Naive thymus-derived CD4-positive, alpha-beta T cell (primary cell): ENCODE measurements at regions of chr12 and their contacts with region 1.

Region 1: GRCh38 chr12:49623142-49623904 is at the start of gene PRPF40B:
- DNase-seq: peak; percentile 82 to 92 (median 89)
- ATAC-seq: peak; percentile 89
- H3K4me3 ChIP-seq: peak within 1 kb of the TSS; percentile 42
- H3K4me3 Mint-ChIP-seq: peak within 1 kb of the TSS; percentile 86 to 96 (median 91)
- H3K27ac ChIP-seq: peak within 1 kb of the TSS; percentile 66
- H3K27ac Mint-ChIP-seq: peak within 1 kb of the TSS; percentile 81 to 95 (median 91)
- H3K4me1 ChIP-seq: peaks cover 6 to 22% of the 10 kb centered on the region in 2 donors
- H3K4me1 Mint-ChIP-seq: peaks cover 19 to 29% (median 23%) of the 10 kb centered on the region in 7 donors
- H3K27me3 ChIP-seq: no peaks in the 10 kb centered on the region
- H3K27me3 Mint-ChIP-seq: peaks cover 0 to 32% (median 0%) of the 10 kb centered on the region in 5 donors
- total RNA-seq, gene PRPF40B: 7.8 to 24.1 (median 12.1) TPM

Region 2: GRCh38 chr12:49366652-49367380 is 256.5 kb before region 1 on chr12:
- CTCF ChIA-PET with region 1: interaction called, 3 read pairs
- POLR2A ChIA-PET with region 1: no interaction called
- intact Hi-C with region 1: loop called (anchors 1 to 5 kb)
- DNase-seq: peak; percentile 72 to 95 (median 82)
- ATAC-seq: peak; percentile 90
- H3K4me3 ChIP-seq: peak overlapping the region; percentile 90
- H3K4me3 Mint-ChIP-seq: peak overlapping the region; percentile 71 to 97 (median 88)
- H3K27ac ChIP-seq: peak overlapping the region; percentile 87
- H3K27ac Mint-ChIP-seq: peak overlapping the region; percentile 65 to 97 (median 94)
- H3K4me1 ChIP-seq: peaks cover 0 to 15% of the 10 kb centered on the region in 2 donors
- H3K4me1 Mint-ChIP-seq: peaks cover 11 to 39% (median 31%) of the 10 kb centered on the region in 7 donors
- H3K27me3 ChIP-seq: no peaks in the 10 kb centered on the region
- H3K27me3 Mint-ChIP-seq: peaks cover 0 to 2% (median 0%) of the 10 kb centered on the region in 5 donors

Region 3: GRCh38 chr12:49553512-49554088 is 69.7 kb before region 1 on chr12:
- CTCF ChIA-PET with region 1: interaction called, 3 read pairs
- POLR2A ChIA-PET with region 1: interaction called, 3 read pairs
- intact Hi-C with region 1: loop called in 1 of 2 experiments (anchors 1 kb)
- DNase-seq: peak in 6 of 9 donors; percentile 33 to 61 (median 48)
- ATAC-seq: peak; percentile 68
- H3K4me3 ChIP-seq: no peak overlapping the region
- H3K4me3 Mint-ChIP-seq: no peak overlapping the region
- H3K27ac ChIP-seq: no peak overlapping the region
- H3K27ac Mint-ChIP-seq: peak overlapping the region in 2 of 9 donors; percentile 9 to 24
- H3K4me1 ChIP-seq: peaks cover 0 to 6% of the 10 kb centered on the region in 2 donors
- H3K4me1 Mint-ChIP-seq: peaks cover 5 to 22% (median 8%) of the 10 kb centered on the region in 7 donors
- H3K27me3 ChIP-seq: no peaks in the 10 kb centered on the region
- H3K27me3 Mint-ChIP-seq: peaks cover 0 to 20% (median 0%) of the 10 kb centered on the region in 5 donors

Region 4: DNA sequence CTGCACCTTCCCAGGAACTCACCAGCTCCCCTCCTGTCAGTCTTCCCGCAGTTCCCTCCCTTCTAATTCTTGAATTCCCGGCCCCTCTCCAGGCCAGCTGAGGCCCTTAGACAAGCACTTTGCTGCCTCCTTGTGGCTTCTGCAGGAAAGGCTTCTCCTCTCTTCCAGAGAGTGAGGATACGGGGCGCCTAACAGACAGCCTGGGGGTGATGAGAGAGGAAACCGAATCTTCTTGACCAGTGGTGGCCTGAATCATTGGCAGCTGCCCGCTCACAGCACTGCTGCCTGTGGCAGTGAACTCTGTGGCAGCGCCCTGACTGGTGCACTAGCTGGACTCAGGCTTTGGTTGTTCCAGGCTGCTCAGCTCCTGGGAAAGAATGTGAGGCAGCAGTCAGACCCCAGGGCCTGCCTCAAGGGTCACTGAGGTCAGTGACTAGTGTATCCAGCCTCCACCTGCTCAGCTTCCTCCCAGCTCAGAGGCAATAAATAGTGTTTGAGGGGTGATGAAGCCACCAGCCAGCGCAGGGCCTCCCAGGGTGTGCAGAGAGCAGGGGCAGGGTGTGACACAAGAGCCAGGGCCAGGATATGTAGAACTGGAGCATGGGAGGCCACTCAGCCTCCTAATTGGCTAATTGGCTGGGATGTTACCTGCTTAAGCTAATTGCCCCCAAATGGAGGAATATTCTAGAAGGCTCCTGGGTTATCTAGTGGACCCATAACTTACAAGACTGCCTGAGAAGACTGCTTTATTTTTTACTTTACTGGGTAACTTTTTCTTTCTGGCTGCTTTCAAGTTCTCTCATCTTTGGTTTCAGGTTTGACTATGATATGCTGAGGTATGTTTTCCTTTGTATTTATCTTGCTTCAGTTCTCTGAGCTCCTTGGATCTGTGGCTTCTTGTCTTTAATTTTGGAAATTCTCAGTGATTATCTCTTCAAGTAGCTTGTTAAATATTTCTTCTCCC is 42.5 kb before region 1 on chr12:
- CTCF ChIA-PET with region 1: interaction called, 5 read pairs
- POLR2A ChIA-PET with region 1: no interaction called
- intact Hi-C with region 1: loop called (anchors 1 to 2 kb)
- DNase-seq: peak; percentile 26 to 55 (median 43)
- ATAC-seq: peak; percentile 80
- H3K4me3 ChIP-seq: no peak overlapping the region
- H3K4me3 Mint-ChIP-seq: no peak overlapping the region
- H3K27ac ChIP-seq: no peak overlapping the region
- H3K27ac Mint-ChIP-seq: peak overlapping the region in 1 of 9 donors; percentile 5
- H3K4me1 ChIP-seq: peaks cover 3 to 5% of the 10 kb centered on the region in 2 donors
- H3K4me1 Mint-ChIP-seq: peaks cover 12 to 18% (median 16%) of the 10 kb centered on the region in 7 donors
- H3K27me3 ChIP-seq: no peaks in the 10 kb centered on the region
- H3K27me3 Mint-ChIP-seq: no peaks in the 10 kb centered on the region

Region 5: GRCh38 chr12:49644620-49644994 is 21.3 kb after region 1 on chr12:
- CTCF ChIA-PET with region 1: interaction called, 29 read pairs
- POLR2A ChIA-PET with region 1: no interaction called
- intact Hi-C with region 1: loop called in 1 of 2 experiments (anchors 2 kb)
- DNase-seq: peak; percentile 71 to 86 (median 81)
- ATAC-seq: peak; percentile 96
- H3K4me3 ChIP-seq: no peak overlapping the region
- H3K4me3 Mint-ChIP-seq: peak overlapping the region in 9 of 10 donors; percentile 3 to 69 (median 41)
- H3K27ac ChIP-seq: peak overlapping the region; percentile 32
- H3K27ac Mint-ChIP-seq: peak overlapping the region; percentile 78 to 96 (median 89)
- H3K4me1 ChIP-seq: peaks cover 7 to 10% of the 10 kb centered on the region in 2 donors
- H3K4me1 Mint-ChIP-seq: peaks cover 25 to 56% (median 37%) of the 10 kb centered on the region in 7 donors
- H3K27me3 ChIP-seq: no peaks in the 10 kb centered on the region
- H3K27me3 Mint-ChIP-seq: no peaks in the 10 kb centered on the region

Region 6: DNA sequence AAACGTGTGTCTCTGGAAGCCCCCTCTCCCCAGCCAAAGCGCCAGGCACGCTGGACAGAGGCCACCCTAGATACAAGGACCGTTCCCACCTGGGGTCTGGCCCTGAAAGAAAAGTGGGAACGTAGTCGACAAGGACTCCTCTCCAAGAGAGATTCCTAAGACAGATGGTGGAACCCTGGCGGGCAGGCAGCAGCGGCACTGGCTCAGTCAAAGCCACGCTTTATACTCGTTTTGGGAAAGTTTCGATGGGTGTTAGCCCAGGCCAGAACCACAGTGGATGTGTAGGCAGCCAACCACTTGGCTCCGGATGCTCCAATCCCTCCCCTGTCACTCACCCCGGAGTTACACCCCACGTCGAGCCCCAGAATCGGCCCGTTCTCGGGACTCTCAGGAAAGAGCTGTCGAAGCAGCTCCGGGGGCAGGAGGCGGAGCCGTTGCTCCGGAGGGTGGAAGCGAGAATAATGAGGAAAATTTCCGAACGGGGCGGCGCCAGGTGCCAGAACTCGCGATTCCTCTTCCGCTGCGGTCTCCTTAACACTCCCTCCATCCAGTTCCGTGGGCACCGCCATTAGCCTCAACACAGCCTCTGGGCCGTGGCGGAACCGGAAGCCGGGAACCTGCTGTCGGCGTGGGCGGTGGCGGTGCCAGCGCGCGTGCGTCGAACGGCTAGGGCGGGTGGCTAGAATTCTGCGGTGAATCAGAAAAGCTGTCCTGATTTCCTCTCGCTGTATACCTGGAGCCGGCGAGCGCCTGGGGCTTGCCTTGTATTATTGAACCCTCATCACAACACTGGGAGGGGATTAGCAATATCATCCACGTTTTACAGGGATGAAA is 219.4 kb after region 1 on chr12 and contains the start of gene BCDIN3D:
- CTCF ChIA-PET with region 1: no interaction called
- POLR2A ChIA-PET with region 1: no interaction called
- intact Hi-C with region 1: loop called in 1 of 2 experiments (anchors 1 kb)
- DNase-seq: peak; percentile 83 to 95 (median 91)
- ATAC-seq: peak; percentile 96
- H3K4me3 ChIP-seq: peak within 1 kb of the TSS; percentile 73
- H3K4me3 Mint-ChIP-seq: peak within 1 kb of the TSS; percentile 85 to 100 (median 94)
- H3K27ac ChIP-seq: peak within 1 kb of the TSS; percentile 80
- H3K27ac Mint-ChIP-seq: peak within 1 kb of the TSS; percentile 90 to 98 (median 96)
- H3K4me1 ChIP-seq: peaks cover 12 to 20% of the 10 kb centered on the region in 2 donors
- H3K4me1 Mint-ChIP-seq: peaks cover 19 to 65% (median 43%) of the 10 kb centered on the region in 7 donors
- H3K27me3 ChIP-seq: no peaks in the 10 kb centered on the region
- H3K27me3 Mint-ChIP-seq: no peaks in the 10 kb centered on the region
- total RNA-seq, gene BCDIN3D: 3.7 to 17.4 (median 6.8) TPM